ENCODE measurements at regions of chr9 and their contacts with region 1.

Region 1: DNA sequence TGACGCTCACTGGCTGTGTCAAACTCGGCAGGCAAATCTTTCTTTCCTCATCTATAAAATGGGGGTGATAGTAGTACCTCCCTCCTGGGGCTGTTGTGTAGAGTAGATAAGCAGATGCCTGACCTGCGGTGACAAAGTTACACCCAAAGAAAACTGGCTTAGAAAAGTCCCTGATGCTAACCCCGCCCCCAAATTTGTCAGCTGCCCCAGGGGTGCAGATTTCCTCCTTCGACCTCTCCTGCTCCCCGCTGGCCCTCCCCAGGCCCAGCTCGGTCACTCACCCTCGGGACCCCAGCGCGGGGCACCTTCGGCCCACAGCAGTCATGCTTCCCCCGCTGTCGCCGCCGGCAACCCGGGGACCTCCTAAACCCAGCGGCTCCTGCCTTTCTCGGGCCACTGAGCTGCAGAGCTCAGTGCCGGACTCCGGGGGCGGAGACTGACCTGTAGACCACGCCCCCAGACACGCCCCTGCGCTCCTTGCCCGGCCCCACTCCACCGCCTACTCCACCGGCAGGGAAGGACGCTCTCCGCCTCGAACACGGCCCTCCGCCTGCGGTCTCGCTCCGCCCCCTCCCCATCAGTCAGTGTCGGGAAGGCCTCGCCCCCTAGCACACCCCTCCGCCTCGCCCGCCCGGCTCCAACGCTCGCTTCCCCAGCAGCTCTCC is 7.4 kb downstream of the SH2D3C start:
- DNase-seq: peak; percentile 99
- ATAC-seq: peak; percentile 95
- H3K4me3 Mint-ChIP-seq: peak overlapping the region; percentile 80
- H3K27ac Mint-ChIP-seq: peak overlapping the region; percentile 80
- H3K4me1 Mint-ChIP-seq: peaks cover 59% of the 10 kb centered on the region
- H3K27me3 Mint-ChIP-seq: no peaks in the 10 kb centered on the region

Region 2: GRCh38 chr9:126860077-126860756 is 910.8 kb before region 1 on chr9 and contains the start of gene ZBTB34:
- CTCF ChIA-PET with region 1: no interaction called
- POLR2A ChIA-PET with region 1: no interaction called
- intact Hi-C with region 1: loop called in 1 of 2 experiments (anchors 5 kb)
- DNase-seq: peak; percentile 84
- ATAC-seq: peak; percentile 83
- H3K4me3 Mint-ChIP-seq: peak within 1 kb of the TSS; percentile 74
- H3K27ac Mint-ChIP-seq: peak within 1 kb of the TSS; percentile 81
- H3K4me1 Mint-ChIP-seq: peaks cover 19% of the 10 kb centered on the region
- H3K27me3 Mint-ChIP-seq: no peaks in the 10 kb centered on the region
- total RNA-seq, gene ZBTB34: 4.2 to 5.0 TPM

Region 3: GRCh38 chr9:127715394-127716337 is 55.4 kb before region 1 on chr9 and contains the starts of genes PTRH1 and TTC16:
- CTCF ChIA-PET with region 1: no interaction called
- POLR2A ChIA-PET with region 1: no interaction called
- intact Hi-C with region 1: loop called in 1 of 2 experiments (anchors 1 kb)
- DNase-seq: peak; percentile 99
- ATAC-seq: peak; percentile 97
- H3K4me3 Mint-ChIP-seq: peak within 1 kb of the TSS; percentile 92
- H3K27ac Mint-ChIP-seq: peak within 1 kb of the TSS; percentile 97
- H3K4me1 Mint-ChIP-seq: peaks cover 25% of the 10 kb centered on the region
- H3K27me3 Mint-ChIP-seq: no peaks in the 10 kb centered on the region
- total RNA-seq, gene PTRH1: 12.9 to 15.1 TPM
- total RNA-seq, gene TTC16: 0.16 to 0.30 TPM

Region 4: DNA sequence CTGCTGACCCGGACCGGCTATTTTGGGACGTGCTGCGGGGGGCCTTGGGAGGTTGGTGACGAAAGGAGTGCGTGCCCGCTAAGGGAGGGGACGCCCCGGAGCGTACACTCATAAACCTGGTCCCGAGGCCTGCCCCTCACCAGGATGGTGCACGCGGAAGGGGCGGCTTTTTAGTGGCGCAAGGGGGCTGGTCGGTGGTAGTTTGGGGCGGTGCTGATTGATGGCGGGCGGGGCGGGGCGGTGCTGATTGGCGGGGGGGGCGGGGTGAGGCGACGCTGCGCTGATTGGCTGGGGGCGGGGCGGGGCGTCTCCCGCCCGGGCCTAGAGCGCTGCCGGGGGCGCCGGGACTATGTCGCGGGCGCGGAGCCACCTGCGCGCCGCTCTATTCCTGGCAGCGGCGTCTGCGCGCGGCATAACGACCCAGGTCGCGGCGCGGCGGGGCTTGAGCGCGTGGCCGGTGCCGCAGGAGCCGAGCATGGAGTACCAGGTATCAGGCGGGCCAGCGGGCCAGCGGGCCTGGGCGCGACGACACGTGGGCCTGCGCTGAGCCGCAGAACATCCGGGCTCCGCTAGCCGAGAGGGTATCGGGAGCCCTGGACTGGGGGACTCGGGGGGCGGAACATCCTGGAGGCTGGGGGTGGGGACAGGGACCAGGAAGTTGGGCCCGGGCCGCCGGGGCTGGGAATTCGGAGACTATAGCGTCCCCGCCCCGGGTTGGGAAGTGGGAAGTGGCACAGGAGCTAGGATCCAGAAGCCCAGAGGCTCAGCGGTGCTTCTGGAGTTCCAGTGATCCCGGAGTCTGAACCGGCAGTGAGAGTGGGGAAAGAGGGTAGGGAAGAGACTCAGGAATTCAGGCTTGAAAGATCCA is 31.8 kb after region 1 on chr9 and contains the start of gene FPGS:
- CTCF ChIA-PET with region 1: interaction called, 5 read pairs
- POLR2A ChIA-PET with region 1: interaction called, 5 read pairs
- intact Hi-C with region 1: loop called (anchors 1 kb)
- DNase-seq: peak; percentile 93
- ATAC-seq: peak; percentile 86
- H3K4me3 Mint-ChIP-seq: peak within 1 kb of the TSS; percentile 98
- H3K27ac Mint-ChIP-seq: peak within 1 kb of the TSS; percentile 95
- H3K4me1 Mint-ChIP-seq: peaks cover 26% of the 10 kb centered on the region
- H3K27me3 Mint-ChIP-seq: no peaks in the 10 kb centered on the region
- total RNA-seq, gene FPGS: 71.9 to 80.4 TPM

Region 5: DNA sequence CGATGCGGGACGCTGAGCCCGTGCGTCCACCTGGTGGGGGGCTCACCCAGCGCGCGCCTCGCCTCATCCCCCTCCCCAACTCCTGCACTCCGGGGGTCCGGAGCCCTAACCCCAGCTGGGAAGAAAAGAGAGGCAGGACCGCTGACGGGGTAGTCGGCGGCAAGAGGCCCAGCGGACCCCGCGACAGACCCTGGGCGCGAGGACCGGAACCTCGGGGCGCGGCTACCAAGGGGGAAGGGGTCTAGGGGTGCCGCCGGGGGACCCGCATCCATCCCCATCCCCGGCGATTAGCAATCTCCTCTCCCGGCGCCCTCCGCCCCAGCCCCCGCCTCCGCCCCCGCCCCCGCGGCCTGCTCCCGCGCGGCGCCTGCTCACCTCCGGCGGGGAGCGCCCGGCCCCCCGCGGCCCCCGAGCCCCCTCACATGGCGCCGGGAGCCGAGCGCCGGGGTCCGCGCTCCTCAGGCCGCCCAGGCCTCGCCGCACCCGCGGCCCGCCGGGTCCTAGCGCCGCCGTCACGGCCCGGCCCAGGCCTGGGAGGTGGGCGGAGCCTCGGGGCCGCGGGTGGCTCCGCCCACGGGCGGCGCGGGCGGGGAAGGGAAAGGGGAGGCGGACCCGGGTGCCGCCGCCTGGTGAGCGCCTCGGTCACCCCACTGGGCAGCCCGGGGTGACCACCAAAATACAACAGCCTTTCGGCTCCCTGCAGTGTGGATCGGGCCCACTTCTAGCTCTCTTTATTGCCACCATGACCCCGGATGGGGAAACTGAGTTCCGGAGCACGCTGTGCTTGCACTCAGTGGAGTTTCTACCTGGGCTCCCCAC is 128.3 kb after region 1 on chr9 and contains the start of gene ST6GALNAC6:
- CTCF ChIA-PET with region 1: no interaction called
- POLR2A ChIA-PET with region 1: no interaction called
- intact Hi-C with region 1: loop called in 1 of 2 experiments (anchors 1 kb)
- DNase-seq: peak; percentile 85
- ATAC-seq: peak; percentile 69
- H3K4me3 Mint-ChIP-seq: peak within 1 kb of the TSS; percentile 82
- H3K27ac Mint-ChIP-seq: peak within 1 kb of the TSS; percentile 87
- H3K4me1 Mint-ChIP-seq: peaks cover 35% of the 10 kb centered on the region
- H3K27me3 Mint-ChIP-seq: no peaks in the 10 kb centered on the region
- total RNA-seq, gene ST6GALNAC6: 46.3 to 63.3 TPM

Region 6: DNA sequence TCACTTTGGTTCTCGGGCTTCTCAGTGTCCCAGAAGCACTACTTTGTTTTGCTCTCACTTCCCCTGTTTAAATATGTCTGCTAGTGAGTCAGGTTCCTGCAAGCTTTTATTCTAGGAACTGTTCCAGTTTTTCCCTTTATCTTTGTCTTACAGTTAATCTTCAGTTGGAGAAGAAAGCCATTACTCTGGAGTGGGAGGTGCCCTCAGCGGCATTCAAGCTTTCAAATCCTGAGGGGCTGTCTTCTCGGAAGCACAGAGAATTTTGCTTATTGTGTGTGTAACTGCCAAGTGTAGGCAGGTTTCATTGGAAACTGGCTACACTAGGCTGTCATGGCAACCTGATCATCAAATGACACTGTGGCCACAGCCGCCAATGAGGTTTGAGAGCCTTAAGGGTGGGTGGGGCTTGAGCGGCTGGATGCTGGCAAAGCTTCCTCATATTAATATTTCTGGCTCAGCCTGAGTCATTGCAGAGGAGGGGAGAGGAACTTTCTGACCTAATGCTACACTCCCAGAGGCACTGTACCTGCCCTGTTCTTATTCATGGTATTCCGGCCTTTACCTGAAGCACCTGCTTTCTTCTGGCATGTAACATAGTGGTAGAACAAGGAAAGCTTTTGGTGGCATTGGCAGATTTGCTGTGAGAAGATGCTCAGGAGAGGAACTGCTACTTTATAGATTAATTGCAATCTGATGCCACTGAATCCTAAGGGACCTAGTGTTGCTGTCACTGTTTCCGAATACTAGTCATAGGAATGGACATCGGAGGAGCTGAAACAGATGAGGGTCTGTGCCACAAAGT is 323.3 kb after region 1 on chr9:
- CTCF ChIA-PET with region 1: no interaction called
- POLR2A ChIA-PET with region 1: interaction called, 12 read pairs
- intact Hi-C with region 1: no loop called
- DNase-seq: peak; percentile 93
- ATAC-seq: peak; percentile 94
- H3K4me3 Mint-ChIP-seq: peak overlapping the region; percentile 61
- H3K27ac Mint-ChIP-seq: peak overlapping the region; percentile 97
- H3K4me1 Mint-ChIP-seq: peaks cover 84% of the 10 kb centered on the region
- H3K27me3 Mint-ChIP-seq: no peaks in the 10 kb centered on the region